ENCODE measurements at regions of chr17 and their contacts with region 1.

Region 1: DNA sequence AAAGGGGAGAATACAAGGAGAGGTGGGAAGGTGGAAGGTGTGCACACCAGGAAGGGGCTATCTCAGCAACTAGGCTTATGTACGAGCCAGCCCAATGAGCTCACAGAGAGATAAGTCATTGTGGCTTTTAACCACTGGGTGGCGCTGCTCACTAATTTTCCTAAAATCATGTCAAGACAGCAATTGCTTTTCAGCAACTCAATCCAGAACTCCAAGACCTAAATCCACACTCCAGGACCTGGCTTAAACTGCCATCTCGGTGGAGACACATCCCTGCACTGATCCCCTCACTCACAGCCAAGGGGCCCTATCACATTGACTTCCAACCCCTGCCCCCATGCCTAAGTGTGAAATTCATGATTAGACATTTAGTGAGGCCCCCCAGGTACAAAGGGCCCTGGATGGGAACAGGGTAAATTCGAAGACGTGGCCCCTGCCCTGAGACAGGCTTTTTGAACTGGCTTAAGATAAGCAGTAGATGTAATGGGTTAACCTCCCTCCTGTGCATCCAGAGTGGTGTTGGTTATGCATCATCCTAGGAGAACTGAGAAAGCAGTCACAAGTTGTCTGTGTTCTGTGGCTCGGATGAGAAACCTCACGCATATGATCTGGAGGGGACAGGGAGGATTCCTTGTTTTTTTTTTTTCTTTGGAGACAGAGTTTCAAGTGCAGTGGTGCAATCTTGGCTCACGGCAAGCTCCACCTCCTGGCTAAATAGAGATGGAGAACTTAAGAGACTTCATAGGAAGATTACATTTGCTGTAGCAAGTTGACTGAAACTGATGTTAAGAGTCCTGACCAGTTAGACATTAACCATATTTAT is 11.5 kb downstream of the CCL16 start:
- DNase-seq: peak; percentile 84 to 87
- H3K4me3 ChIP-seq: no peak overlapping the region
- H3K4me3 Mint-ChIP-seq: peak overlapping the region; percentile 16
- H3K27ac Mint-ChIP-seq: peak overlapping the region; percentile 67
- H3K4me1 ChIP-seq: peaks cover 47% of the 10 kb centered on the region
- H3K4me1 Mint-ChIP-seq: peaks cover 28% of the 10 kb centered on the region
- H3K27me3 ChIP-seq: no peaks in the 10 kb centered on the region
- H3K27me3 Mint-ChIP-seq: no peaks in the 10 kb centered on the region
- CTCF ChIP-seq: peak; percentile 73 to 86

Region 2: GRCh38 chr17:35841505-35841904 is 128.3 kb before region 1 on chr17:
- CTCF ChIA-PET with region 1: no interaction called
- POLR2A ChIA-PET with region 1: no interaction called
- intact Hi-C with region 1: no loop called
- DNase-seq: no peak
- H3K4me3 ChIP-seq: no peak overlapping the region
- H3K4me3 Mint-ChIP-seq: no peak overlapping the region
- H3K27ac Mint-ChIP-seq: no peak overlapping the region
- H3K4me1 ChIP-seq: no peaks in the 10 kb centered on the region
- H3K4me1 Mint-ChIP-seq: no peaks in the 10 kb centered on the region
- H3K27me3 ChIP-seq: no peaks in the 10 kb centered on the region
- H3K27me3 Mint-ChIP-seq: no peaks in the 10 kb centered on the region
- CTCF ChIP-seq: no peak

Region 3: GRCh38 chr17:35947156-35947585 is 22.6 kb before region 1 on chr17:
- CTCF ChIA-PET with region 1: interaction called, 14 read pairs
- POLR2A ChIA-PET with region 1: no interaction called
- intact Hi-C with region 1: loop called (anchors 1 kb)
- DNase-seq: peak; percentile 73 to 76
- H3K4me3 ChIP-seq: peak overlapping the region; percentile 25
- H3K4me3 Mint-ChIP-seq: peak overlapping the region; percentile 60
- H3K27ac Mint-ChIP-seq: no peak overlapping the region
- H3K4me1 ChIP-seq: peaks cover 13% of the 10 kb centered on the region
- H3K4me1 Mint-ChIP-seq: no peaks in the 10 kb centered on the region
- H3K27me3 ChIP-seq: no peaks in the 10 kb centered on the region
- H3K27me3 Mint-ChIP-seq: no peaks in the 10 kb centered on the region
- CTCF ChIP-seq: peak; percentile 90 to 93

Region 4: DNA sequence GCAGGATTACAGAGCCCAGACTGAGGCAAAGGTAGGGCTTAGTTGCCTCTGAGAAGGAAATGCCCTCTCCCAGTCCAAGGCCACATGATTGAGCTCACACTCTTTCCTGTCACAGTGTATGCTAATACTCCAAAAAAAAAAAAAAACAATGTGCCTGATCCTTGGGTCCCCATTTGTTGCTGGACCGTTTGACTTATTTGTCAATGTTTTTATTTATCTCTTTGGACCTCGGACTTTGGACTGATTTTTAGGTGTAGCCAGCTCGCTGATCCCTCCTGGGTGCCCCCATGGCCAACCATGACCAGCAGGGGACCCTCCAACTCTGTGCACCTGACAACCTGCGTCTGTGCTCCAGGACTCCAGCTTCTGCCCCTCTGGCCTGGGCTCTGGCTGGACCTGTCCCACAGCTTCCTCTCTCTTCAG is 12.2 kb after region 1 on chr17:
- CTCF ChIA-PET with region 1: interaction called, 15 read pairs
- POLR2A ChIA-PET with region 1: no interaction called
- intact Hi-C with region 1: no loop called
- DNase-seq: peak; percentile 58 to 62
- H3K4me3 ChIP-seq: no peak overlapping the region
- H3K4me3 Mint-ChIP-seq: no peak overlapping the region
- H3K27ac Mint-ChIP-seq: no peak overlapping the region
- H3K4me1 ChIP-seq: peaks cover 24% of the 10 kb centered on the region
- H3K4me1 Mint-ChIP-seq: peaks cover 9% of the 10 kb centered on the region
- H3K27me3 ChIP-seq: no peaks in the 10 kb centered on the region
- H3K27me3 Mint-ChIP-seq: no peaks in the 10 kb centered on the region
- CTCF ChIP-seq: peak in 1 of 2 experiments; percentile 48

Region 5: GRCh38 chr17:36008998-36009665 is 39.4 kb after region 1 on chr17:
- CTCF ChIA-PET with region 1: interaction called, 12 read pairs
- POLR2A ChIA-PET with region 1: no interaction called
- intact Hi-C with region 1: loop called (anchors 1 kb)
- DNase-seq: peak in 1 of 2 experiments; percentile 39
- H3K4me3 ChIP-seq: no peak overlapping the region
- H3K4me3 Mint-ChIP-seq: no peak overlapping the region
- H3K27ac Mint-ChIP-seq: no peak overlapping the region
- H3K4me1 ChIP-seq: 0 out of 2 replicates have a peak, but pooled peaks cover 2% of the 10 kb centered on the region
- H3K4me1 Mint-ChIP-seq: no peaks in the 10 kb centered on the region
- H3K27me3 ChIP-seq: no peaks in the 10 kb centered on the region; the same call in 1 of the 2 replicates
- H3K27me3 Mint-ChIP-seq: peaks cover 3% of the 10 kb centered on the region
- CTCF ChIP-seq: peak; percentile 32 to 71

Region 6: GRCh38 chr17:36072431-36073121 is 102.8 kb after region 1 on chr17:
- CTCF ChIA-PET with region 1: interaction called, 64 read pairs
- POLR2A ChIA-PET with region 1: no interaction called
- intact Hi-C with region 1: loop called (anchors 1 kb)
- DNase-seq: peak; percentile 54 to 77
- H3K4me3 ChIP-seq: no peak overlapping the region
- H3K4me3 Mint-ChIP-seq: no peak overlapping the region
- H3K27ac Mint-ChIP-seq: no peak overlapping the region
- H3K4me1 ChIP-seq: no peaks in the 10 kb centered on the region
- H3K4me1 Mint-ChIP-seq: no peaks in the 10 kb centered on the region
- H3K27me3 ChIP-seq: no peaks in the 10 kb centered on the region
- H3K27me3 Mint-ChIP-seq: no peaks in the 10 kb centered on the region
- CTCF ChIP-seq: peak; percentile 81 to 89

Region 7: GRCh38 chr17:36148559-36149295 is 179.0 kb after region 1 on chr17:
- CTCF ChIA-PET with region 1: interaction called, 43 read pairs
- POLR2A ChIA-PET with region 1: no interaction called
- intact Hi-C with region 1: loop called (anchors 1 kb)
- DNase-seq: peak; percentile 58 to 79
- H3K4me3 ChIP-seq: no peak overlapping the region
- H3K4me3 Mint-ChIP-seq: no peak overlapping the region
- H3K27ac Mint-ChIP-seq: no peak overlapping the region
- H3K4me1 ChIP-seq: no peaks in the 10 kb centered on the region
- H3K4me1 Mint-ChIP-seq: no peaks in the 10 kb centered on the region
- H3K27me3 ChIP-seq: no peaks in the 10 kb centered on the region
- H3K27me3 Mint-ChIP-seq: peaks cover 7% of the 10 kb centered on the region
- CTCF ChIP-seq: peak; percentile 98

Region 8: DNA sequence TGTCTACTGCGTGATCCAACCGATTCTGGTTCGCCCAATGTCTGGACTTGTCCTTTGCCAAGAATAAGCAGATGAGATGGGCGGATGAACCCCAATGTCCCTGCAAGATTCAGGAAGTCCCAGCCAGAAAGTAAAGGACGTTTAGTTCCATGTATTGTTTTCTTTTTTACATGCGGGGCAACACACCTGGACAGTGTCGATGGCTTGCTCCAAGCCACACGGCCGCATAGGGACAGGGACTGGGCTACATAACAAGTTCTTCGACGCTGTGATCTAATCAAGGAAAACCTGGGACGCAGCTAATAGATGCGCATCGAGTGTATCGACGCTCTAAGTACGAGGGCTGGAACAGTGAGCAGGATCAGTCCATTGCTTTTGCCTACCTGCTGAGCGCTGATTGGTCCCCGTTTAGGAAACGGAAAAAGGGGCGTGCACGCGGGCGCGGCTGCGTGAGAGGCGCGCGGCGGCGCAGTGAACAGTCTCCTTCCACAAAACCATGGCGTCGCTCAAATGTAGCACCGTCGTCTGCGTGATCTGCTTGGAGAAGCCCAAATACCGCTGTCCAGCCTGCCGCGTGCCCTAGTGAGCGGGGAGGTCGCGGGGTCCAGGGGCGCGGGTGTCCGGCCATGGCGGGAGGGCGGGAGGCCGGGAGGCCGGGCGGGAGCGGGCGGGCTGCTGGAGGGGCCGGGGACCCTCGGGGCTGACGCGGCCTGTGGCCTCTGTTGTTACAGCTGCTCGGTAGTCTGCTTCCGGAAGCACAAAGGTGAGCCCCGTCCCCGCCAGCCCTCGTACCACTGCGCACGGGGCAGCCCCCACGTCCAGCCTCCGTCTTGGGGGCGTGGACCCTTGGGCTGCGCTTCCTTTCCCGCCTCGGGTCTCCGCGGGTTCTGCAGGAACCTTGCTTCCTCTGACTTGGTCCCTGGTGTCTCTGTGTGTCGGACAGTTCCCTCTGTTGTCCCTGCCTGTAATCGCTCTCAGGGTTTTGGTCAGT is 516.7 kb after region 1 on chr17 and contains the start of gene ZNHIT3:
- CTCF ChIA-PET with region 1: interaction called, 12 read pairs
- POLR2A ChIA-PET with region 1: no interaction called
- intact Hi-C with region 1: loop called (anchors 5 kb)
- DNase-seq: peak; percentile 92 to 94
- H3K4me3 ChIP-seq: peak within 1 kb of the TSS; percentile 68
- H3K4me3 Mint-ChIP-seq: peak within 1 kb of the TSS; percentile 95
- H3K27ac Mint-ChIP-seq: peak within 1 kb of the TSS; percentile 97
- H3K4me1 ChIP-seq: peaks cover 6% of the 10 kb centered on the region
- H3K4me1 Mint-ChIP-seq: no peaks in the 10 kb centered on the region
- H3K27me3 ChIP-seq: no peaks in the 10 kb centered on the region; the same call in 1 of the 2 replicates
- H3K27me3 Mint-ChIP-seq: peaks cover 10% of the 10 kb centered on the region
- CTCF ChIP-seq: no peak
- total RNA-seq, gene ZNHIT3: 58.6 and 61.9 TPM in 2 replicates